ENCODE measurements at regions of chr5 and their contacts with region 1.

Region 1: DNA sequence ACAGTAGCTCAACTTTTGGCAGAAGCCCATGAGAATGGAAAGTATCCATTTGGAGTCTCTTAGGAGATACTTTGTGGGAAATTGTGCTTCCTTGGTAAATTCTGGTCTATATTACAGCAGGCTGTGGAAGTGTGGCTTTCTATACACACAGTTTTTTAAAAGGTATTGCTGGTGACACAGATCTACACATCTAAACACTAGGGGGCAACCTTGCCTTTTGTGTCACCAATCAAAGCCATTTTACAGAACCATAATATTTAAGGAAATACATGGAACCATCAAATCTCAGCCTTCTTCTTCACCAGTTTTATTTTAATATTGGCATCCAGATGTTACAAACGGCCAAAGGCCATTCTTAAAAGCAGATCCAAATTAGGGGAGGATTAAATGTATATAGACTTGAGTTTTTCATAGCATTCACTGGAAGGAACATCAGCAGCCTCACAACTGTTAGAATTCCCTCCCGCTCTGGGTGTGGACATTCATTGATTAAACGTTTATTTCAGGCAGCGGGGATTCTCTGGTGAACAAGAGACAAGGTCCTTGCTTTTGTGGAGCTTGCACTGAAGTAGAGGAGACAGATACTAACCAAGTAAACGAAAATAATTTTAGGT is 132.4 kb upstream of the EPB41L4A start:
- DNase-seq: peak; percentile 72
- ATAC-seq: peak; percentile 73
- H3K4me3 ChIP-seq: no peak overlapping the region
- H3K27ac ChIP-seq: no peak overlapping the region
- H3K4me1 ChIP-seq: no peaks in the 10 kb centered on the region; the same call in 1 of the 2 replicates
- H3K27me3 ChIP-seq: peaks cover 10% of the 10 kb centered on the region
- CTCF ChIP-seq: peak; percentile 82
- POLR2A ChIP-seq: no peak
- RAD21 ChIP-seq: peak; percentile 81

Region 2: DNA sequence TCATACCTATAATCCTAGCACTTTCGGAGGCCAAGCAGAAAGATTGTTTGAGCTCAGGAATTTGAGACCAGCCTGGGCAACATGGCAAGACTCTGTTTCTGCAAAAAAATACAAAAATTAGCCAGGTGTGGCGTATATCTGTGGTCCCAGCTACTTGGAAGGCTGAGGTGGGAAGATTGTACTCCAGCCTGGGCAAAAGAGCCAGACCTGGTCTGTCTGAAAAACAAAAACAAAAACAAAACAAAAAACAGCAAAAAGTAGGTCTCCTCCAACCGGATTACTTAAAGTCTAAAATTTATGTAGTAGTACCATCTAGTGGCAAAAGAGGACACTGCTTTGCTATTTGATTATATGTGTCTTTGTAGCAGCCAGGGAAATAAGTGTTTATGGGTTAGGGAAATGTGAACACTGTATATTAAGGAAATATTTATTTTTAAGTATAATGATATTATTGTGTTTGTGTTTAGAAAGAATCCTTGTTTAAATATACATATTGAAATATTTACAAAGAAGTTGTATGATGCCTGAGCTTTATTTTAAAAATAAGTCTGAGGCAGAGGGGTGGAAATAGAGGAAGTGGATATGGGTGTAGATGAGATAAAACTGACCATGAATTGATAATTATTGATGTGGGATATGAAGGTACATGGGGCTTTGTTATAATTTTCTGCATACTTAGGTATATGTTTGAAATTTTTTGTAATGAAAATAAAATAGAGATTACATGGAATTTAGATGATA is 206.1 kb after region 1 on chr5:
- CTCF ChIA-PET with region 1: interaction called, 7 read pairs
- POLR2A ChIA-PET with region 1: no interaction called
- dilution Hi-C with region 1: no loop called
- in situ Hi-C with region 1: loop called (anchors 5 kb)
- intact Hi-C with region 1: loop called (anchors 1 kb)
- DNase-seq: peak; percentile 68
- ATAC-seq: peak; percentile 89
- H3K4me3 ChIP-seq: no peak overlapping the region
- H3K27ac ChIP-seq: no peak overlapping the region
- H3K4me1 ChIP-seq: no peaks in the 10 kb centered on the region
- H3K27me3 ChIP-seq: no peaks in the 10 kb centered on the region
- CTCF ChIP-seq: peak; percentile 82
- POLR2A ChIP-seq: no peak
- RAD21 ChIP-seq: peak; percentile 75

Region 3: GRCh38 chr5:112848116-112848811 is 296.7 kb after region 1 on chr5:
- CTCF ChIA-PET with region 1: interaction called, 10 read pairs
- POLR2A ChIA-PET with region 1: no interaction called
- dilution Hi-C with region 1: no loop called
- in situ Hi-C with region 1: loop called (anchors 10 kb)
- intact Hi-C with region 1: loop called (anchors 1 kb)
- DNase-seq: peak; percentile 78
- ATAC-seq: peak; percentile 97
- H3K4me3 ChIP-seq: no peak overlapping the region; the same call in 1 of the 2 replicates
- H3K27ac ChIP-seq: no peak overlapping the region
- H3K4me1 ChIP-seq: no peaks in the 10 kb centered on the region
- H3K27me3 ChIP-seq: no peaks in the 10 kb centered on the region
- CTCF ChIP-seq: peak; percentile 67
- POLR2A ChIP-seq: no peak
- RAD21 ChIP-seq: peak; percentile 48; the same call in 1 of the 2 replicates

Region 4: GRCh38 chr5:112921833-112922817 is 370.6 kb after region 1 on chr5 and contains the start of gene REEP5:
- CTCF ChIA-PET with region 1: no interaction called
- POLR2A ChIA-PET with region 1: no interaction called
- dilution Hi-C with region 1: no loop called
- in situ Hi-C with region 1: no loop called
- intact Hi-C with region 1: loop called (anchors 2 kb)
- DNase-seq: peak; percentile 69
- ATAC-seq: peak; percentile 87
- H3K4me3 ChIP-seq: peak within 1 kb of the TSS; percentile 92
- H3K27ac ChIP-seq: peak within 1 kb of the TSS; percentile 97
- H3K4me1 ChIP-seq: peaks cover 9% of the 10 kb centered on the region
- H3K27me3 ChIP-seq: peaks cover 2% of the 10 kb centered on the region; the same call in 1 of the 2 replicates
- CTCF ChIP-seq: peak; percentile 82
- POLR2A ChIP-seq: peak; percentile 79
- RAD21 ChIP-seq: peak; percentile 59
- total RNA-seq, gene REEP5: 49.3 and 70.3 TPM in 2 replicates

Region 5: DNA sequence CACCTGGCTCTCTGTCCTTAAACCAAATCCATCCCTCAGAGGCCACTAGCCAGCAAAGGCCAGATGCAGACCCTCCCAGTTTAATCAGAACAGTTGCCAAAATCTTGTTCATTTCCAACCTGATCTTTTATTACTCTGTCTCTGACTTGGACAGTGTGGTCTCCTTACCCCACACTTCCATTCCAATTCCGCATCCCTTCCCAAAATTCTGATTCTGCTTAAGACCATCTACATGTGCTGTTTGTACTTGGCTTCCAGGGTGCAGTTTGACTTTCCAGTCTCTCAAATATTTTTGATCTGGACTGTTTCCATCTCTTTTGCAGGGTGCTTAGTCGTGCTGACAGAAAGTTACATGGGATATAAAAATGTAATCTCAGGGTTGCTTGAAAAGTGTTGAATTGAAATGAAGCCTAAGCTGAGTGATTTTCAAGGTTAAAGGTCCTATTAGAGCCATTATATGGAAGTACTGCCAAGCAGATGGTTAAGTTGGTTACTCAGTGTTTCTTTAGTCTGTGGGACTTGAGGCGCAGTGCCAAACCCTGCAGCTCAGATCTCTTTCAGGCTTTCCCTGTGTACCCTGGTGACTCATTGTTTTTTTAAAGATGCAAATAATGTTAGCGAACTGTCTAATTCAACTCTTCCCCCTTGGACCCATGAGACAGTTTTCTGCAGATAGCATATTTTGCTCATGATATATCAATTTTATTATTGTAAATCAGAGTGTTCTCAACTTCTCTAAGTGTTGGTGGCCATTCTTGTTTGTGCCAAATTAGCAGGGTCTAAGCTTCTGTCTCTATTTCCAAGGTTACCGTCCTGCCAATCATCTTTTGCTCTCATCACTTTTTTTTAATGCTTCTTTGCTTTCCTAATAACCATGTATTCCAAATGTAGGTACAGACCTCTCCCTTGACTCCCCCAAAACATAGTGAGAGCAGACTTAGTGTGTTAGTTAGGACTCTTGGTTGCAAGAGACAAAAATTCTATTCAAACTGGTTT is 406.9 kb after region 1 on chr5:
- CTCF ChIA-PET with region 1: no interaction called
- POLR2A ChIA-PET with region 1: no interaction called
- dilution Hi-C with region 1: no loop called
- in situ Hi-C with region 1: loop called (anchors 25 kb)
- intact Hi-C with region 1: no loop called
- DNase-seq: peak; percentile 98
- ATAC-seq: peak; percentile 87
- H3K4me3 ChIP-seq: no peak overlapping the region
- H3K27ac ChIP-seq: no peak overlapping the region
- H3K4me1 ChIP-seq: peaks cover 17% of the 10 kb centered on the region
- H3K27me3 ChIP-seq: no peaks in the 10 kb centered on the region
- CTCF ChIP-seq: no peak
- POLR2A ChIP-seq: no peak
- RAD21 ChIP-seq: no peak

Region 6: DNA sequence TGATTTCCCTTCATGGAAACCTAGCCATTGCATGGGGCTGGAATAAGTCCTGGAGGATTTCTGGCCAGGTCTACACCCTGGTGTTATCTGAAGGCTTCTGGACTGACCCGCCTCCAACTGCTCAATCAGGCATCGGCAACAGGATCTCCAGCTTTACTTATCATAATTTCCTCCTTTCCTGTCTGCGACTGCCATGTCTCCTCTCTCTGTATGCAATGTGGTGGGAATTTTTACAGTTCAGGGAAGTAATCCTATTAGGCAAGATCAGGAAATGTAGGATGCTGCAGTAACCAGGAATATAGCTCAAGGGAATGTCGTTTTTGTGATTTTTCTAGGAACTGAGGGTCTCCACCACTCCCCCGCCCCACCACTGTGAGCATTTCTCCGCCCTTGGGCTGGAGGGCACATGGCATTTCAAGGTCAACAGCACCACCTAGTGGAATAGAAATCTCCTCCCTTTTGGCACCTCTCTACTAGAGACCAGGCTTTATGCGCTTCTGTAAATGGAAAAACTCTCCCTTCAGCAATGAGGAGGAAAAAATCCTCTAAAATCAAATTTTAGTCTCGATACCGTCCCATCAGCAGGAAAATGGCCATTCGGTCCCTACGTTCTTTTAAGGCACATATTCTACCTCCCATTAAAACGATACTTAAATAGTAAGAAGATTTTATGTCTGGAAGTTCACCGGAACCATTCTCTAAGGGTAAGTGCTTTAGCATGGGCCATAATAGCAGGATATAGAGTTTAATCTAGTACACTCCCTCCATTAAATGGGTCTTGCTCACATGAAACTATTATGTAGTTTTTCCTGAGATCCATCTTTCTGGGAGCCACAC is 1055.0 kb after region 1 on chr5:
- CTCF ChIA-PET with region 1: no interaction called
- POLR2A ChIA-PET with region 1: no interaction called
- dilution Hi-C with region 1: no loop called
- in situ Hi-C with region 1: loop called (anchors 25 kb)
- intact Hi-C with region 1: loop called (anchors 2 kb)
- DNase-seq: peak; percentile 56
- ATAC-seq: peak; percentile 90
- H3K4me3 ChIP-seq: no peak overlapping the region
- H3K27ac ChIP-seq: no peak overlapping the region
- H3K4me1 ChIP-seq: peaks cover 6% of the 10 kb centered on the region; the same call in 1 of the 2 replicates
- H3K27me3 ChIP-seq: no peaks in the 10 kb centered on the region; the same call in 1 of the 2 replicates
- CTCF ChIP-seq: peak; percentile 80
- POLR2A ChIP-seq: no peak
- RAD21 ChIP-seq: peak; percentile 91

Measured in IMR-90 (cell line).